ENCODE measurements at regions of chr6 and their contacts with region 1.

Region 1: DNA sequence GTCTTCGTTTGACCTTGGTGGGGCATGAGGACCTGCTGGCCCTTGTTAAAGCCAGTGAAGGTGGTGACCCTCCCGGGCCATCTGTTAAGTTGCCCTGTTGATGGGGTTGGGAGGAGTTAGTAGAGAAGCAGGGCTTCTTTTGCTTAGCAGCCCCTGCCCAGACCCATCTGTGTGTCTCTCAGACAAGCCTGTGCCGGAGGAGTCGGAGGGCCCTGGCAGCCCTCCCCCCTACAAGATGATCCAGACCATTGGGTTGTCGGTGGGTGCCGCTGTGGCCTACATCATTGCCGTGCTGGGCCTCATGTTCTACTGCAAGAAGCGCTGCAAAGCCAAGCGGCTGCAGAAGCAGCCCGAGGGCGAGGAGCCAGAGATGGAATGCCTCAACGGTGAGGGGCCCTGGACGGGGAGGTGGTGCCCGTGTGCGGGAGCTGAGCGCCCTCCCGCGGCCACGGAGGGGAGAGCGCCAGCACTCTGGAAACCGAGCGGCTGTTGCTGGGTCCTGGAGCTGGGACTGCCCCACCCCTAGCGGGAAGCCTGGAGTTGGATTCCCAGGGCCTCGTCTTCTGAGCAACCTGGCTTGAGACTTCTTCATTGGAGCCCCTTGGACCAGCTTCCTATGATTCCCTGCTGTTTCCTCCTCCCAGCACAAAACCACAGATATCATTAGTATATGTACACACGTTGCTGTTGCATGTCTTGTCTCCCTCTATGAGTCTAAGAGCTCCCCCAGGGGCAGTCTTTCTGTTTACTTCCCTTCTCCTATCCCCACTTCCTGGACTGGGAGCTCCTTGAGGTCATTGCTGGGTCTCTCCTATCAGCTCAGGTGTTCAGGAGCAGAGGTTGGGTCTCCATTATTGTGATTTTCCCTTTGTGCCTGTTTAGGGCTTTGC is 27.6 kb upstream of the SRF start:
- DNase-seq: peak; percentile 94
- CTCF ChIP-seq: peak; percentile 93

Region 2: GRCh38 chr6:42911171-42912021 is 232.1 kb before region 1 on chr6:
- CTCF ChIA-PET with region 1: interaction called, 12 read pairs
- POLR2A ChIA-PET with region 1: no interaction called
- DNase-seq: peak; percentile 15
- CTCF ChIP-seq: no peak

Region 3: DNA sequence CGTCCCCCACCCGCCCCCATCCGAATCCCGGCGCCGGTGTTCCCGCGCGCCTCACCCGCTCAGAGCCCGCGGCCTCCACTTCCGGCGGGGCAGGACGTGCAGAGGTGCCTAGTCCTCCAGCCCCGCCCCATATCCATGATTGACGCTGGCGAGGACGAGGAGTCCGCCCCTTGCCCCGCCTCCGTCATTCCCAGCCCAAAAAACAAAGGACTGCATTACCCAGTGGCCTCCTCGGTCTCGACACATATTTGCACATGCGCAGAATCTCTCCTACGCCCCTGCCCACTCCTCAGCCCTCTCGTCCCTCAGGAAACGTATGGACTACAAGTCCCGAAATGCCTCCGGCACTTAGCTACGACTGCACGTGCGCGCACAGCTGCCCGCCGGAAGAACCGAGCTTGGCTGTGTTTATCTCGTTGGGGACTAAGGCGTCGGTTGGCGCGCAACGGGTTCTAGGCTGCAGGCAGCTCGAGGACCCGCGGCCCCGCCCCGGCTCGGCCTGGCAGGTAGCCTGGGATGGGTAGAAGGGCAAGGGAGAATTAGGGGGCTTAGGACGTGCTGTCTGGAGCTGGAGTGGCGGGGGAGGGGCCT is 129.5 kb before region 1 on chr6 and contains the starts of genes KLHDC3 and MEA1:
- CTCF ChIA-PET with region 1: interaction called, 15 read pairs
- POLR2A ChIA-PET with region 1: no interaction called
- DNase-seq: peak; percentile 100
- CTCF ChIP-seq: no peak

Region 4: DNA sequence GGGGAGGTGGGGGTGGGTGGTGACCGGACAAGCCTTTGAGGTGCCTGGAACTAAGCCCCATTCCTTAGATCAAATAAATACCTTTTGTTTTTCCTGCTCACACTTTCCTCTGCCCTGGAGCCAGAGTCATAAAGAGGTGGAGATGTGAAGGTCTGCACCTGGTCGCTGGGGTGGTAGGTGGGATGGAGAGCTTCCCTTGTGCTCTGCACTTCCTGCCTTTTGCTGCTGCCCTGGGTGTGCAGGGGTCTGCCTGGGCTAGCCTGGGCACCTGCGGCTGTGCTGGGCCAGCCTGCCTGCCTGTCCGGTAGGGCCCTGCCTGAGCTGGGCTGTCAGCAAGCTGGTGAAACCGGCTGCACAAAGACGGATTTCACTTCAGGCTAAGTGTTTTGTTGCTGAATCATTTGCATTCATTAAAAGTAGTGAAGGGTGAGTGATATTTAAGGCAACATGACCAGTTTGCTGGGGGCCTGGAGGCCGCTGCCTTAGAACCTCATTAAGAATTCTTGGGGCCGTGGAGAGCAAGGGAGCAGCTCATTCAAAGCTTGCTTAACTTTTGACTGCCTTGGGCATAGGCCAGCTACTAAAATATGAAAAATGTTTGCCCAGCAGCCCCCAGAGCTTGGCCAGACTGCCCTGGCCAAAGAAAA is 46.9 kb before region 1 on chr6:
- CTCF ChIA-PET with region 1: interaction called, 11 read pairs
- POLR2A ChIA-PET with region 1: no interaction called
- DNase-seq: no peak
- CTCF ChIP-seq: no peak

Region 5: DNA sequence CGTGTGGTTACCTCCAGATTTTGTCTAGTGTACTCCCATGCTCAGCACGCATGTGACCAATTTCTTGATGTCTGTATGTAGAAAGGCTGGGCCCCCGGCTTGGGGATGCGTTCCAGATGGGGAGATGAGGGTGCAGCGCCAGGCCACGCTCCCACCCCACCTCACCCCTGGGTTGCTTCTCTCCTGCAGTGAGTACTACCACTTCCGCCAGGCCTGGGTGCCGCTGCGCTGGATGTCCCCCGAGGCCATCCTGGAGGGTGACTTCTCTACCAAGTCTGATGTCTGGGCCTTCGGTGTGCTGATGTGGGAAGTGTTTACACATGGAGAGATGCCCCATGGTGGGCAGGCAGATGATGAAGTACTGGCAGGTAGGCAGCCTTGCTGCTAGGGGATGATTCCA is 16.1 kb after region 1 on chr6:
- CTCF ChIA-PET with region 1: interaction called, 22 read pairs
- POLR2A ChIA-PET with region 1: no interaction called
- DNase-seq: no peak
- CTCF ChIP-seq: no peak